Heart right ventricle (tissue), 16 donors: ENCODE measurements at regions of chr13 and their contacts with region 1.

Region 1: GRCh38 chr13:94435604-94436226 is 43.8 kb downstream of the DCT start:
- DNase-seq: no peak
- ATAC-seq: peak in 6 of 8 donors; percentile 50 to 65 (median 62)
- H3K4me3 ChIP-seq: no peak overlapping the region
- H3K27ac ChIP-seq: no peak overlapping the region
- H3K4me1 ChIP-seq: peaks cover 0 to 13% (median 0%) of the 10 kb centered on the region in 9 donors
- H3K27me3 ChIP-seq: peaks cover 0 to 4% (median 0%) of the 10 kb centered on the region in 7 donors
- CTCF ChIP-seq: peak in 7 of 9 donors; percentile 56 to 73 (median 65)

Region 2: DNA sequence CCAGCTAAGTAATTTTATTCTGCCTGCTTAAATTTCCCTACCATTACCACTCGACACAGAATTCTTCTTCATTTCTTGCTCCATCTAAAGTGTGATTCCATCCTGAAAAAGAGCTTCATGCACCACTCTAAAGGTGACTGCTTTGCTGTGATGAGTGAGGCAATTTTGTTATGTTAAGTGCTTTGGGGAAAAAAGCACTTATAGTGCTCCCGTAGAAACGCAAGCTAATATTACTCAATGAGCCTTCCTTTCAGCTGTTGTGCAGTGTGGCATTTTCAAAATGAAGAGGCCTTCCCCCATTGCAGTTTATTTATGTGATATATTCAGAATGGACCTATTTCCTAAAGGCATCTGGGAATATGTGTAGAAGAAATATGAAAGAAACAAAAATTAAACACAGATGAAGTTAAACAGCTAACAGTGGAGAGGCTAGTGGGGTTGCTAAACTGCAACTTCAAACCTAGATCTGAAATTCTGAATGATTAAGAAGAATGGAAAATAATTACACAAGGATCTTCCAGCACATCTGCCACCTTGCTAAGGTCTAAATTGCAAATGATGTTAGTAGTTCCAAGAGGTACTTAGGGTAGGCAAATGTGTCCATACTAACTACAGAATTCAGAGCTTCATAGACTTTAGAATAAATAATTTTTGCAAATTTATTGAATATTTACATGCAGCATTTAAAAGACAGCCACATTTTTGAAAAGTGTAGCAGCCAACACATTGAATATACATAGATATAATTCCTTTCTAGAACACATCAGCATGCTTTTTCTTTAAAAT is 167.9 kb before region 1 on chr13:
- intact Hi-C with region 1: no loop called
- DNase-seq: no peak
- ATAC-seq: no peak
- H3K4me3 ChIP-seq: no peak overlapping the region
- H3K27ac ChIP-seq: no peak overlapping the region
- H3K4me1 ChIP-seq: no peaks in the 10 kb centered on the region
- H3K27me3 ChIP-seq: no peaks in the 10 kb centered on the region
- CTCF ChIP-seq: no peak

Region 3: DNA sequence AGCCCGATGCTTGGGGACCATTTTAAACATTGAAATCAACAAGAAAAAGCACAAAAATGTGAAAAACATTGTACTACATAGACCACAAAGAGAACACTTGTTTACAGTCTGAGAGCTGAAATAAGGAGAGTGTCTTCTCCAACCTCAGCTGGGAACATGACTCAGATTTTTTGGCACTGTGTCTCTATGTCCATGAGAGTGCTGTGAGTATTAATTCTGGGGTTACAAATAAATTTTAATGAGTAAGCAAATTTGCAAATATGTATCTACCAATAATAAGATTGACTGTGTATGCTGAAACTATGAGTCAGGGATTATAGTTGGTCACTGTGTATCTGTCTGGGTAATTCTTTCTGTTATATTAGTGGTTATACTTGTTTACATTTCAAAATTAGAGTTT is 130.3 kb before region 1 on chr13:
- intact Hi-C with region 1: no loop called
- DNase-seq: peak in 1 of 2 donors; percentile 15
- ATAC-seq: peak in 5 of 8 donors; percentile 56 to 77 (median 67)
- H3K4me3 ChIP-seq: no peak overlapping the region
- H3K27ac ChIP-seq: peak overlapping the region in 1 of 10 donors; percentile 0
- H3K4me1 ChIP-seq: peaks cover 0 to 28% (median 3%) of the 10 kb centered on the region in 9 donors
- H3K27me3 ChIP-seq: no peaks in the 10 kb centered on the region
- CTCF ChIP-seq: no peak

Region 4: DNA sequence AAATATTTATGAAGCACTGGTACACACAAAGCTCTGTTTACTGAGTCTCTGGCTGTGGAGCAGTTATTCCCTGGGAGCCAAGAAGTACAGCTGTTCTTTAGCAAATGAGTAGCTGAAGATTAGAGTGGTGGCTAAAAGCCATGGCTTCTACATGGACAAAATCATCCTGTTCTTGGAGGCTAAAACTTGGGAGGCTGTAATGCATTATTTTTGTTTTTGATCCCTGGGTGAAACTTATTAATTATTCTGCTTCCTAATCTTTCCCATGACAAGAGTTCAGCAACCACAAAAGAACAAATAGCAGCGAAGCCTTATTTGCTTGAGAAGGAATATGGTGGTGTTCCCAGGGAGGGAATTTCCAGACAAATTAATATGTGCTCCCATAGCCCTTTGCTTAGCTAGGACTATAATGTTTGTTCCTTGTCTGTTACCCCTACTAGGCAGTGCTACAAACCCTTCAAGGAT is 65.7 kb before region 1 on chr13:
- intact Hi-C with region 1: no loop called
- DNase-seq: peak in 1 of 2 donors; percentile 22
- ATAC-seq: peak in 7 of 8 donors; percentile 74 to 91 (median 75)
- H3K4me3 ChIP-seq: no peak overlapping the region
- H3K27ac ChIP-seq: no peak overlapping the region
- H3K4me1 ChIP-seq: peaks cover 0 to 11% (median 0%) of the 10 kb centered on the region in 9 donors
- H3K27me3 ChIP-seq: no peaks in the 10 kb centered on the region
- CTCF ChIP-seq: no peak

Region 5: GRCh38 chr13:94549232-94550061 is 113.7 kb after region 1 on chr13:
- intact Hi-C with region 1: loop called in 1 of 10 experiments (anchors 10 kb)
- DNase-seq: peak; percentile 91 to 93
- ATAC-seq: peak; percentile 96 to 98 (median 98)
- H3K4me3 ChIP-seq: peak overlapping the region; percentile 46 to 85 (median 72)
- H3K27ac ChIP-seq: peak overlapping the region; percentile 79 to 96 (median 92)
- H3K4me1 ChIP-seq: peaks cover 0 to 19% (median 8%) of the 10 kb centered on the region in 9 donors
- H3K27me3 ChIP-seq: no peaks in the 10 kb centered on the region
- CTCF ChIP-seq: peak in 1 of 9 donors; percentile 3

Region 6: GRCh38 chr13:94612050-94612449 is 176.3 kb after region 1 on chr13:
- intact Hi-C with region 1: loop called in 9 of 10 experiments (anchors 1 to 5 kb)
- DNase-seq: no peak
- ATAC-seq: no peak
- H3K4me3 ChIP-seq: no peak overlapping the region
- H3K27ac ChIP-seq: no peak overlapping the region
- H3K4me1 ChIP-seq: peaks cover 0 to 17% (median 7%) of the 10 kb centered on the region in 9 donors
- H3K27me3 ChIP-seq: no peaks in the 10 kb centered on the region
- CTCF ChIP-seq: no peak

Region 7: DNA sequence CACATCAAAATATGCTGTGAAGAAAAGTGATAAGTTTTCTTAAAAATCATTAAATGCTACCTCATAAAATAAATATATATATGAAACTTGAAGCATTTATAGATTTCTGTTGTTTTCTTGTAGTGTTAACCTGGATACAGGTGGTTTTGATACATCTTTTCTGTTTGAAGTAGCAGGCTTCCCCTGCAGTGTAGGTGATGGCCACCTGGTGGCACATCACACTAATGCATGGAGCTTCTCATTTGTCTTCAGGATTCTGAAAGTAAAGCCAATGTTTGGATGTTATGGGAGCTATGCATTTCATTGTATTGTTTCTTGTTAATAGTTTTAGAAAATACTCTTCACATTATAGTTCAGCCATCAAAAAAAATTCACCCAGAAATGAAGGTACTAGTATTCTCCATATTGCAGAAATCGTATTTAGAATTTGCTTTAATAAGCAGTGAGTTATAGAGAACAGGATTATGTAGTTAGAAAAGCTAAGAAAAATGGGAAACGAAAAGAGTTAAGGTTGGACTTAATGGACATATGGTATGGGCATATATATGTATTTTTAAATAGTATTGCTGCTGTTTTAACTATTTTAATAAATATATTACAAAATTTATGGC is 184.7 kb after region 1 on chr13:
- intact Hi-C with region 1: loop called in 9 of 10 experiments (anchors 1 to 5 kb)
- DNase-seq: no peak
- ATAC-seq: no peak
- H3K4me3 ChIP-seq: no peak overlapping the region
- H3K27ac ChIP-seq: no peak overlapping the region
- H3K4me1 ChIP-seq: peaks cover 0 to 8% (median 0%) of the 10 kb centered on the region in 9 donors
- H3K27me3 ChIP-seq: no peaks in the 10 kb centered on the region
- CTCF ChIP-seq: peak in 7 of 9 donors; percentile 41 to 59 (median 44)